ENCODE measurements at regions of chr14 and their contacts with region 1.

Region 1: GRCh38 chr14:22018890-22019289 is 345.3 kb upstream of the OR4E1 start:
- DNase-seq: no peak
- ATAC-seq: no peak
- H3K4me3 Mint-ChIP-seq: no peak overlapping the region
- H3K27ac Mint-ChIP-seq: no peak overlapping the region
- H3K4me1 Mint-ChIP-seq: peaks cover 3% of the 10 kb centered on the region
- H3K27me3 Mint-ChIP-seq: no peaks in the 10 kb centered on the region
- CTCF ChIP-seq: no peak

Region 2: DNA sequence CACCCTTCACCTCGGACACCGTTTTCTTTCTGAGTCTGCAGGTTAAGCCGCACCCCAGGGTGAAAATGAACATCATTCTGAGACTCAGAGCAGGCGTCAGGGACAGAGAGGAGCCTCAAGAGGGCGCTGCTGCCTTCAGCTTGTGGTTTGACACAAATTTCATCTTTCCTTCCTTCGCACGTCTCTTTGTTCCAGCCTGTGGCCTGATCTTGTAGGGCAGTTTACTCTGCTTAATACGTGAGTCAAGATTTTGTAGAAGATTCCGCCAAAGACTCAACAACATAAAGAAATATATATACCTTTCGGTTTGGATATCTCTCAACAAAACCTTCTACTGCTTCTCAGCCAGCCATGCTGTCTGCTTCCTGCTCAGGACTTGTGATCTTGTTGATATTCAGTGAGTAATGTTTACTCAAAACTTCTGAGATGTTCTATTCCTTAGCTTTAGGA is 16.0 kb before region 1 on chr14:
- CTCF ChIA-PET with region 1: interaction called, 14 read pairs
- POLR2A ChIA-PET with region 1: no interaction called
- intact Hi-C with region 1: no loop called
- DNase-seq: peak; percentile 86
- ATAC-seq: peak; percentile 79
- H3K4me3 Mint-ChIP-seq: peak overlapping the region; percentile 81
- H3K27ac Mint-ChIP-seq: peak overlapping the region; percentile 92
- H3K4me1 Mint-ChIP-seq: peaks cover 17% of the 10 kb centered on the region
- H3K27me3 Mint-ChIP-seq: no peaks in the 10 kb centered on the region
- CTCF ChIP-seq: peak; percentile 58

Measured in activated CD8-positive, alpha-beta T cell treated with anti-CD3 and anti-CD28 coated beads for 36 hours (primary cell).